ENCODE measurements at regions of chr20 and their contacts with region 1.

Region 1: DNA sequence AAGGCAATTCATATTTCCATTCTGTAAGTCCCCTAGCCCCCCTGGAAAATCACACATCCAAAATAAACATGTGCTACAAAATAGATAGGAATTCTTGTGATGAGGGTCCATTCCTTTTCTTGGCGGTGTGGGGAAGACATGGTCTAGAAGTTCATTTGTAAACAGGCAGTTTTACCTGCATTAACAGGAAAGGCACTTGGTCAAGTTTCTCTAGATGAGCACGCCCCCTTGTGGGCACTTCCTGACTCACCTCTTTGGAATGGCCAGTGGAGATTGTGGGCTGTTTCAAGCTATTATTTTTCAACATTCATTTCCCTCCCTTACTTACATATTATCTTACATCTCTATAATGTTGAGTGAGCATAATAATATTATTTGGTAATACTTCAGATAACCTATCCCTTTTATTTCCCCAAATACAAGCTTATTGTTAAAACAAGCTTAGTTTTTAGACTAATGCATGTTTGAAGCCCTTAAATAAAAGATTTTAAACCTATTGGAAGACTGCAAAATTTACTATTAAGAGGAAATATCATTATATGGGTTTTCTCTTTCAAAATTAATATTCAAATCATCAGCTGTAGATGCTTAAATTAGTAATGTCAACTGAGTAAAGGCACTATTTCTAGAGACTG is 92.1 kb downstream of the TASP1 start:
- DNase-seq: peak; percentile 52
- ATAC-seq: peak; percentile 68; the same call in 1 of the 2 replicates
- H3K4me3 ChIP-seq: no peak overlapping the region
- H3K27ac ChIP-seq: no peak overlapping the region
- H3K4me1 ChIP-seq: no peaks in the 10 kb centered on the region
- H3K27me3 ChIP-seq: no peaks in the 10 kb centered on the region
- CTCF ChIP-seq: peak; percentile 88

Region 2: DNA sequence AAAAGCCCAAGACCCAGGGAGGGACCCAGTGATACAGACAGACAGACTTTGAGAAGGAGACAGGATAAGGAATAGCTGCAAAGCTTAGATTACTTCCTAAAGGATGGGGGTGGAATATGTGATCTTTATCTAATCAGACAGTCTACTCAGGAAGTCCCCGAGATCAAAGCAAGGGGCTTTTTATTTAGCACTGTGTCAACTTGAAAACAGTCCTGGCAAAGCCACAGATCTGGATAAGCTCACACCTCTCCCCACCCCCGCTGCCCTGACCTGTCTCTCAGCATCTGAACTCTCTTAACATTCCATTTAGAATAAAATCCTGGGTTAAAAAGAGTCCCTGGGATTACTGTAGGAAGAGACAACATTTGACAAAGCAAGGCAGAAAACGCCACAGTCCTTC is 224.0 kb before region 1 on chr20:
- CTCF ChIA-PET with region 1: interaction called, 5 read pairs
- POLR2A ChIA-PET with region 1: no interaction called
- in situ Hi-C with region 1: no loop called
- intact Hi-C with region 1: loop called (anchors 5 kb)
- DNase-seq: no peak
- ATAC-seq: no peak
- H3K4me3 ChIP-seq: no peak overlapping the region
- H3K27ac ChIP-seq: no peak overlapping the region
- H3K4me1 ChIP-seq: no peaks in the 10 kb centered on the region
- H3K27me3 ChIP-seq: no peaks in the 10 kb centered on the region
- CTCF ChIP-seq: no peak

Measured in Panc1 (cell line).